Prostate gland (tissue), 2 donors: ENCODE measurements at regions of chr4 and their contacts with region 1.

Region 1: DNA sequence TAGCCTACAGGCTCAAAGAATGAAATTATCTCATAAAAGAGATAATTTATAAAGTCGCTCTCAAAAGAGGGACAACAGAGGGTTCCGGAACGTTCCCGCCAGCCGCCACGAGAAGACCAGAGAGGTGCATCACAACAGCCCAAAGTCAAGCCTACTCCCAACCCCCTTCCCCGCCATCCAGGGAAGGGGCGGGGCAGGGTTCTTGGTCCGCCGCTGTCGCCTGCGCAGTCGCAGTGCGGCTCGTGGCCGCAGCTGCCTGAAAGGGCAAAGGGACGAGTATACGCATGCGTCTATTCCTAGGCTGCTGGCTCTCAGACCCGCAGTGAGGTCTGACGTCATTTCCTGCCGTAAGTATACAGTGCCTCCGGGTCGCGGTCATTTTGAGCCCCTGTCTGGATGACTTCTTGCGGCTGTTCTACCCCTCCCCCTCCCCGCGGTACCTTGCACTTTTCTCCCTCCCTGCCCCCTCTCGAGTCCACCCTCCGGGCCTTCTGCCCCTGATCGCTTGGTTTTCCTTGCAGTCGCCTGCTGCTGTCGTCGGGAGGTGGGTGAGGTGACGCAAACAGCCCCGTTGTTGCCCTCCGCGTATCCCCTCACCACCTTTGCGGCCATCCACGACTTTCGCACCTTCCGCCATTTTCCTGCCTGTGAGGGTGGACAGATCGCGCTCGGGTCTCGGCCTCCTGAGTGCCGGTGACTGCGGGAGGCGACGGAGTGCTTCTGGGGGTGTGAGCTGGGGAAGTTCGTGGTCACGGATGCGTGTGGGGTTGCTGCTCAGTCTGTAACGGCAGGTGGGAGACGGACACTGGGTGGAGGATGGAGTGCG is at the start of gene OCIAD1:
- DNase-seq: peak; percentile 99
- H3K4me3 ChIP-seq: peak within 1 kb of the TSS; percentile 86 to 89
- H3K27ac ChIP-seq: peak within 1 kb of the TSS; percentile 91
- H3K4me1 ChIP-seq: peaks cover 5% of the 10 kb centered on the region
- H3K27me3 ChIP-seq: no peaks in the 10 kb centered on the region
- CTCF ChIP-seq: peak in 1 of 4 experiments; percentile 6
- POLR2A ChIP-seq: peak; percentile 66
- total RNA-seq, gene OCIAD1: 114 to 176 TPM

Region 2: GRCh38 chr4:48588230-48589097 is 242.5 kb before region 1 on chr4:
- intact Hi-C with region 1: loop called (anchors 10 kb)
- DNase-seq: no peak
- H3K4me3 ChIP-seq: no peak overlapping the region
- H3K27ac ChIP-seq: no peak overlapping the region
- H3K4me1 ChIP-seq: no peaks in the 10 kb centered on the region
- H3K27me3 ChIP-seq: no peaks in the 10 kb centered on the region
- CTCF ChIP-seq: no peak
- POLR2A ChIP-seq: no peak

Region 3: DNA sequence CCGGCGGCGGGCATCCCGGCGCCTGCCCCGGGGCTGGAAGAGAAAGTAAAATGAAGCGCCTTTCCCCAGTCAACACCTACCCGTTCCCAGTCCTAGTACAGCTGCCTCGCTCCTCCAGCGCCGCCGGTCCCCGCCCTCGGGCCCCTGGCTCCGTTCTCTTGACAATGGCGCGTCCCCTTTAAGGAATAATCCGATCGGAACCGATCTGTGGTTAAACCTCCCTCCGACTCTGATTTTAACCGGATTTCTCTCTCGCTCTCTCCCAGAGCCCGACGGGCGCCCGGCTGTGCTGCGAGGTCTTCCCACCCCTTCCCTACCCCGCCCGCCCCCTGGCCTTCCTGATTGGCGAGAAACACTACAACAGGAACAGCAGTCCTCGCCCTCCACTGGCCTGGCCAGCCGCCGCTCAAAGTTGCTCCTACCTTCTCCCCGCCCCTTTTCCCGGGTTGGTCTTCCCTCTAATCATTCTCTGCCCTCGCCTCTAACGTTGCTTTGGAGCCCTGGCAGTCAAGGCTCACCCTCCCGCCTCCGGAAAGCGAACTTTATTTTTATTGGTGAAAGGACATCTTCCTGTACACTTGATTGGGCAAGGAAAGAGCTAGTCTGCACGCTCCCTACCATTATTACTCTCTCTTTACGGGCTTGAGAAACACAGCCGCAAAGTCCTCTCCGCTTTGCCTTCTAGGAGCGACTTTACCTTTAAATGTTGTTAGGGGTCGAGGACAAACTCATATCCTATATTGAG is 50.7 kb before region 1 on chr4 and contains the start of gene FRYL:
- intact Hi-C with region 1: loop called (anchors 2 kb)
- DNase-seq: peak; percentile 100
- H3K4me3 ChIP-seq: peak within 1 kb of the TSS; percentile 88 to 98
- H3K27ac ChIP-seq: peak within 1 kb of the TSS; percentile 94 to 95
- H3K4me1 ChIP-seq: no peaks in the 10 kb centered on the region
- H3K27me3 ChIP-seq: no peaks in the 10 kb centered on the region
- CTCF ChIP-seq: no peak
- POLR2A ChIP-seq: peak; percentile 50
- total RNA-seq, gene FRYL: 40.0 to 47.6 TPM